B cell (primary cell): ENCODE measurements at regions of chr12 and their contacts with region 1.

Region 1: GRCh38 chr12:76031537-76032073 is at the start of gene PHLDA1:
- DNase-seq: peak; percentile 93
- ATAC-seq: peak; percentile 87
- H3K4me3 ChIP-seq: peak within 1 kb of the TSS; percentile 48 to 89 (median 79)
- H3K4me3 Mint-ChIP-seq: peak within 1 kb of the TSS; percentile 96
- H3K27ac ChIP-seq: peak within 1 kb of the TSS; percentile 19 to 81
- H3K27ac Mint-ChIP-seq: peak within 1 kb of the TSS; percentile 92
- H3K4me1 ChIP-seq: peaks cover 18 to 23% of the 10 kb centered on the region in 2 donors
- H3K4me1 Mint-ChIP-seq: peaks cover 25% of the 10 kb centered on the region
- H3K27me3 ChIP-seq: peaks cover 2 to 29% (median 25%) of the 10 kb centered on the region in 4 experiments
- H3K27me3 Mint-ChIP-seq: peaks cover 23% of the 10 kb centered on the region
- CTCF ChIP-seq: peak; percentile 48
- total RNA-seq, gene PHLDA1: 1.7 TPM in 2 replicates

Region 2: GRCh38 chr12:75334384-75335030 is 697.1 kb before region 1 on chr12 and contains the start of gene GLIPR1L1:
- CTCF ChIA-PET with region 1: interaction called, 12 read pairs
- POLR2A ChIA-PET with region 1: no interaction called
- intact Hi-C with region 1: loop called (anchors 1 kb)
- DNase-seq: peak; percentile 86
- ATAC-seq: peak; percentile 83
- H3K4me3 ChIP-seq: peak within 1 kb of the TSS in 2 of 5 experiments; percentile 33 to 41
- H3K4me3 Mint-ChIP-seq: peak within 1 kb of the TSS; percentile 76
- H3K27ac ChIP-seq: no peak within 1 kb of the TSS
- H3K27ac Mint-ChIP-seq: no peak within 1 kb of the TSS
- H3K4me1 ChIP-seq: peaks cover 16% of the 10 kb centered on the region in 2 donors
- H3K4me1 Mint-ChIP-seq: peaks cover 18% of the 10 kb centered on the region
- H3K27me3 ChIP-seq: peaks cover 0 to 14% (median 6%) of the 10 kb centered on the region in 4 experiments
- H3K27me3 Mint-ChIP-seq: peaks cover 25% of the 10 kb centered on the region
- CTCF ChIP-seq: peak; percentile 93
- total RNA-seq, gene GLIPR1L1: not detected in 2 replicates

Region 3: GRCh38 chr12:75511116-75512048 is 520.2 kb before region 1 on chr12 and contains the start of gene KRR1:
- CTCF ChIA-PET with region 1: interaction called, 6 read pairs
- POLR2A ChIA-PET with region 1: interaction called, 4 read pairs
- intact Hi-C with region 1: loop called (anchors 5 kb)
- DNase-seq: peak; percentile 95
- ATAC-seq: peak; percentile 97
- H3K4me3 ChIP-seq: peak within 1 kb of the TSS; percentile 61 to 100 (median 93)
- H3K4me3 Mint-ChIP-seq: peak within 1 kb of the TSS; percentile 93
- H3K27ac ChIP-seq: peak within 1 kb of the TSS; percentile 72 to 83
- H3K27ac Mint-ChIP-seq: peak within 1 kb of the TSS; percentile 95
- H3K4me1 ChIP-seq: peaks cover 11 to 18% of the 10 kb centered on the region in 2 donors
- H3K4me1 Mint-ChIP-seq: peaks cover 28% of the 10 kb centered on the region
- H3K27me3 ChIP-seq: no peaks in the 10 kb centered on the region
- H3K27me3 Mint-ChIP-seq: no peaks in the 10 kb centered on the region
- CTCF ChIP-seq: no peak
- total RNA-seq, gene KRR1: 80.2 and 87.7 TPM in 2 replicates

Region 4: GRCh38 chr12:75641031-75641780 is 390.4 kb before region 1 on chr12:
- CTCF ChIA-PET with region 1: no interaction called
- POLR2A ChIA-PET with region 1: no interaction called
- intact Hi-C with region 1: loop called (anchors 5 kb)
- DNase-seq: peak; percentile 20
- ATAC-seq: peak; percentile 91
- H3K4me3 ChIP-seq: no peak overlapping the region
- H3K4me3 Mint-ChIP-seq: peak overlapping the region; percentile 20
- H3K27ac ChIP-seq: no peak overlapping the region
- H3K27ac Mint-ChIP-seq: peak overlapping the region; percentile 22
- H3K4me1 ChIP-seq: peaks cover 0 to 6% of the 10 kb centered on the region in 2 donors
- H3K4me1 Mint-ChIP-seq: peaks cover 16% of the 10 kb centered on the region
- H3K27me3 ChIP-seq: no peaks in the 10 kb centered on the region
- H3K27me3 Mint-ChIP-seq: no peaks in the 10 kb centered on the region
- CTCF ChIP-seq: no peak

Region 5: DNA sequence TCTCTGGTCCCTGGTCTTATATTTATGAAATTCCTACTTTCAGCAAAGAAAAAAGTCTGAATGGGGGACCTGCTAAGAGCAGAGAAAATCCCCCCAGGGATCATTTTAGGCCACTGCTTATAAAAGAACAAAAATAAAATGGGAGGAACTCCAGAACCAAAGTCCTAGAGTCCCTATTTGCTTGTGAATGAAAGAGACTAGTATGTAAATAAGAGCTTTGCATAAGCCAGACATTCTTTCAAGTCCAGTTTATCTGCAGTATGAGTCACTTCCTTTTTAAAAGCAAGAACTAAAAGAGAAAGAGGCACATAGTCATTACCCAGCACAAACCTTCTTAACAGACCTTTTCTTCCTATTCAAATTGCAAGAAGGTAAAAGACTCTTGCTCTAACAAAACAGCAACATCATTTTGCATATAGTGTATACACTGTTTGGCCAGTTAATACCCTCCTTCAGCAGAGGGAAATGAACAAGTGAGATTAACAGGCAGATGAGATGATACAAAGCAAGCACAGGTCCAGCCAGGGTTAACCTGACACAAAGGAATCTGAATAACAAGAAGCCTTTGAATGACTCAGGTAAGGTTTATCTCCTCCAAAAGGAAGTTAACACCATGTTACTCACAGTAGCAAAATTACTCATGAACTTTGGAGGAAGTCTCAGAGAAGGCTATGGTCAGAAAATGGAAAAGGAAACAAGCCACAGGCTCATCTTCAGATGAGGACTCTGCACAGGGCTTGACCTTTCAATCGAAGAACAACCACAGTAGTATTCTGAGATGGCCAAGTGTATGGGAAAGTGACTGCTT is 87.3 kb before region 1 on chr12:
- CTCF ChIA-PET with region 1: no interaction called
- POLR2A ChIA-PET with region 1: no interaction called
- intact Hi-C with region 1: loop called (anchors 1 kb)
- DNase-seq: peak; percentile 29
- ATAC-seq: peak; percentile 60
- H3K4me3 ChIP-seq: no peak overlapping the region
- H3K4me3 Mint-ChIP-seq: peak overlapping the region; percentile 57
- H3K27ac ChIP-seq: no peak overlapping the region
- H3K27ac Mint-ChIP-seq: peak overlapping the region; percentile 81
- H3K4me1 ChIP-seq: peaks cover 8 to 12% of the 10 kb centered on the region in 2 donors
- H3K4me1 Mint-ChIP-seq: peaks cover 13% of the 10 kb centered on the region
- H3K27me3 ChIP-seq: no peaks in the 10 kb centered on the region
- H3K27me3 Mint-ChIP-seq: no peaks in the 10 kb centered on the region
- CTCF ChIP-seq: no peak

Region 6: DNA sequence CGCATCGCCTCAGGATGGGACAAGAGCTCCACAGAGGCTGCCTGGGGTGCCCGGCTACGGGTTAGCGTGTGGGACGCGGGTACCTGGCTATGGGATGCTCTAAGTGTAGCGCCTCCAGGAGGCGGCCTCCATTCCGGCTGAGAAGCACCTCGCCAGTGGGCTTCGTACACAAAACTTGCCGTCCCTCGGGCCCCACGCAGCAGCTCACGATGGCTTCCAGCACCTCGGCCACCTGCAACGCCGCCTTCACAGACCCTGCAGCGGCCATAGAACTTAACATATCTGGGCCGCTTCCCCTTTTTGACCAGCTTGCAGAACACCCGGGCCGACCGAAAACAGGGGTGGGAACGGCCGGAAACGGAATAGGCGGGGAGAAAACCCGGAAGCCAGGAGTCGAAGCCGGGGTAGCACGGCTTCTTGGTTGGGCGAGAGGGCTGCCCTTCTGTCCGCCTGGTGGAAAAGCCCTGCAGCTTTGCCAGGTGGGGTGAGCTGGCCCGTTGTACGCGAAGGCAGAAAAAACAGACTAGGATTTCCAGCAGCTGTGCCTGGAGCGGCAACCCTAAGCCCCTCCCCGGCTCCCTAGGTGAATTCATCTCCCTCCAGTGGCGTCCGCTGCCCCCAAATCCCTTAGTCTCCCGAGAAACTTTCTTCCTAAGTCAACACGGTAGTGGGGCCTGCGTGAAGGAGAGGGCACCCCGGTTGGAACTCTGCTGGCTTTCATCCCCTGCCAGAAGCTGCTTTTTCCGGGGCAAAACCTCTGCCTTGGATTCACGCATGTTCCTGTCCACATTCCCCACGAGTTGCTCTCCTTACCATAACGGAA is 316.7 kb after region 1 on chr12 and contains the start of gene BBS10:
- CTCF ChIA-PET with region 1: interaction called, 5 read pairs
- POLR2A ChIA-PET with region 1: no interaction called
- intact Hi-C with region 1: loop called (anchors 5 kb)
- DNase-seq: peak; percentile 94
- ATAC-seq: peak; percentile 97
- H3K4me3 ChIP-seq: peak within 1 kb of the TSS; percentile 76 to 90 (median 79)
- H3K4me3 Mint-ChIP-seq: peak within 1 kb of the TSS; percentile 92
- H3K27ac ChIP-seq: peak within 1 kb of the TSS; percentile 86 to 89
- H3K27ac Mint-ChIP-seq: peak within 1 kb of the TSS; percentile 98
- H3K4me1 ChIP-seq: peaks cover 17% of the 10 kb centered on the region in 2 donors
- H3K4me1 Mint-ChIP-seq: peaks cover 27% of the 10 kb centered on the region
- H3K27me3 ChIP-seq: no peaks in the 10 kb centered on the region
- H3K27me3 Mint-ChIP-seq: no peaks in the 10 kb centered on the region
- CTCF ChIP-seq: peak; percentile 9
- total RNA-seq, gene BBS10: 11.2 and 12.9 TPM in 2 replicates

Region 7: GRCh38 chr12:77060136-77060882 is 1028.7 kb after region 1 on chr12:
- CTCF ChIA-PET with region 1: no interaction called
- POLR2A ChIA-PET with region 1: interaction called, 11 read pairs
- intact Hi-C with region 1: no loop called
- DNase-seq: peak; percentile 69
- ATAC-seq: peak; percentile 75
- H3K4me3 ChIP-seq: peak overlapping the region in 1 of 5 experiments; percentile 38
- H3K4me3 Mint-ChIP-seq: peak overlapping the region; percentile 23
- H3K27ac ChIP-seq: peak overlapping the region; percentile 3 to 12
- H3K27ac Mint-ChIP-seq: peak overlapping the region; percentile 22
- H3K4me1 ChIP-seq: peaks cover 28 to 41% of the 10 kb centered on the region in 2 donors
- H3K4me1 Mint-ChIP-seq: peaks cover 42% of the 10 kb centered on the region
- H3K27me3 ChIP-seq: peaks cover 0 to 22% (median 13%) of the 10 kb centered on the region in 4 experiments
- H3K27me3 Mint-ChIP-seq: peaks cover 10% of the 10 kb centered on the region
- CTCF ChIP-seq: no peak